Prostate gland (tissue), 2 donors: ENCODE measurements at regions of chr17 and their contacts with region 1.

Region 1: GRCh38 chr17:79188048-79188447 is 113.4 kb downstream of the ENGASE start:
- DNase-seq: no peak
- H3K4me3 ChIP-seq: no peak overlapping the region
- H3K27ac ChIP-seq: no peak overlapping the region
- H3K4me1 ChIP-seq: peaks cover 4% of the 10 kb centered on the region
- H3K27me3 ChIP-seq: peaks cover 39% of the 10 kb centered on the region
- CTCF ChIP-seq: peak in 3 of 4 experiments; percentile 27 to 53 (median 51)
- POLR2A ChIP-seq: no peak

Region 2: GRCh38 chr17:78378225-78379130 is 809.6 kb before region 1 on chr17 and contains the start of gene PGS1:
- intact Hi-C with region 1: no loop called
- DNase-seq: peak; percentile 65
- H3K4me3 ChIP-seq: peak within 1 kb of the TSS; percentile 97 to 99
- H3K27ac ChIP-seq: peak within 1 kb of the TSS; percentile 78 to 79
- H3K4me1 ChIP-seq: peaks cover 13% of the 10 kb centered on the region
- H3K27me3 ChIP-seq: no peaks in the 10 kb centered on the region
- CTCF ChIP-seq: no peak
- POLR2A ChIP-seq: peak; percentile 75
- total RNA-seq, gene PGS1: 29.2 to 57.4 TPM

Region 3: DNA sequence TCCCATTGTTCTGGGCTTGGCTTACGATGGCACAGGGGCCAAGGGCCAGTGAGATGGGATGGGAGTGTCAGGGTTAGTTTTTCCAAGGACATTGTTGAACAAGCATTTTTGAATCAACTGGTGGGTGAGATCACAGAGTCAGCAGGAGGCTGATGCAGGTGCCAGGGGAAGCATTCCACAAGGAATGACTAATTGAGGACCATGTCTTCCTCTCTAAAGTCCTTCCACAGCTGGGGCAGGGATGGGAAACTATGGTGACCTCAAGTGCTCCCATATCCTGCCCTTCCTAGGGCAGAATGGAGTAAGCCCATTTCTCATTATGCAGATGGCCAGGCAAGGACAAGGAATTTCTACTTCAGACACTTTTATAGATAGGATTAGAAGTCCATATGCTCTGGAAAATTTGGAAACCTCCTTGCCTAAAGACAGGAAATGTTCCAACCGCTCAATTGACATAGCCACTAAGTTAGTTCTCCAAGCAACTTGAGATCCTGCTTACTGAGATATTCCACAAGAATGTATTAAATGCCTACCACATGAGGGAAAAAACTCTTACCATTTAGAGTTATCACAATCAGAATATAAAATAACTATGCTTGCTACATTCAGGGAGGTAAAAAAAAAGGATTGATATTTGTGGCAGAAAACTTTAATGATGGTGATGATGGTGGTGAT is 134.7 kb before region 1 on chr17:
- intact Hi-C with region 1: no loop called
- DNase-seq: no peak
- H3K4me3 ChIP-seq: no peak overlapping the region
- H3K27ac ChIP-seq: no peak overlapping the region
- H3K4me1 ChIP-seq: no peaks in the 10 kb centered on the region
- H3K27me3 ChIP-seq: no peaks in the 10 kb centered on the region
- CTCF ChIP-seq: no peak
- POLR2A ChIP-seq: no peak

Region 4: DNA sequence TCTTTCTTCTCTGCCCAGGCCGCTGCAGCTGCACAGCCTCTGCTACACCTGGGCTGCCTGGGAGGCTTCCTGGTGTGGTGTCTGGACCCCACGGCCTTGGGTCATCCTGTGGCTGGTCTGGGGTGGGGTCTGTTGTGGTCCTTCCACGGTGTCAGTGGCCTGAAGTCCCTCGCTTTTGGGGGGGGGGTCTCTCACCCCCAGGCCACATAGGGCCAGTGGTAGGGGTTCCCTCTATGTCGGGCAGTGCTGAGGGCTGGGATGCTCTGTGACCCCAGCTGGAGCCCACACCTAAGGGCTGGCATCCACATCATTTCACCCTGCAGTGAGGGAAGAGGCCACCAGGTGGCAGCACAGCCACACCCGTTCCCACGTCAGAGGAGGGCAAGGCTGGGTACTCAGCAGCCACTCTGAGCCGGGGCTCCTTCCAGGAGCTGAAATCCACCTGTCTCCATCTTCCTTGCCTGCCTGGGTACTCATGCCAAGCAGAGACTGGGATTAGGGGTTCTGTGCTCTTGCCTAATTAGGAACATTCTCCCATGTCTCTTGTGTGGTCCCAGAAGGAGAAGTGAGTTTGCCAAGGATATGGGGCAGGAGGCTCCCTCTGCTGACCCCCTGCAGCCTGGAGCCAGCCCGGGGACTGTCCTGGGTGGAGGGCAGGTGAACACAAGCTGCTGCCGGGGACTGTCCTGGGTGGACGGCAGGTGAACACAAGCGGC is 100.5 kb before region 1 on chr17:
- intact Hi-C with region 1: loop called (anchors 5 kb)
- DNase-seq: peak; percentile 68
- H3K4me3 ChIP-seq: no peak overlapping the region
- H3K27ac ChIP-seq: no peak overlapping the region
- H3K4me1 ChIP-seq: no peaks in the 10 kb centered on the region
- H3K27me3 ChIP-seq: no peaks in the 10 kb centered on the region
- CTCF ChIP-seq: peak; percentile 87 to 94 (median 93)
- POLR2A ChIP-seq: no peak

Region 5: GRCh38 chr17:79231766-79232287 is 43.8 kb after region 1 on chr17:
- intact Hi-C with region 1: no loop called
- DNase-seq: no peak
- H3K4me3 ChIP-seq: no peak overlapping the region
- H3K27ac ChIP-seq: no peak overlapping the region
- H3K4me1 ChIP-seq: no peaks in the 10 kb centered on the region
- H3K27me3 ChIP-seq: peaks cover under 1% of the 10 kb centered on the region
- CTCF ChIP-seq: no peak
- POLR2A ChIP-seq: no peak